IMR-90 (cell line): ENCODE measurements at regions of chr7 and their contacts with region 1.

Region 1: GRCh38 chr7:87152107-87152844 is at the start of gene DMTF1:
- DNase-seq: peak; percentile 93
- ATAC-seq: peak; percentile 88
- H3K4me3 ChIP-seq: peak within 1 kb of the TSS; percentile 81
- H3K27ac ChIP-seq: peak within 1 kb of the TSS; percentile 89
- H3K4me1 ChIP-seq: 0 out of 2 replicates have a peak, but pooled peaks cover 2% of the 10 kb centered on the region
- H3K27me3 ChIP-seq: no peaks in the 10 kb centered on the region
- CTCF ChIP-seq: 0 out of 2 replicates have a peak, but pooled peaks have one; percentile 6
- POLR2A ChIP-seq: peak; percentile 90
- RAD21 ChIP-seq: no peak
- total RNA-seq, gene DMTF1: 59.0 and 69.7 TPM in 2 replicates

Region 2: GRCh38 chr7:86939197-86939814 is 213.0 kb before region 1 on chr7:
- CTCF ChIA-PET with region 1: interaction called, 3 read pairs
- POLR2A ChIA-PET with region 1: no interaction called
- dilution Hi-C with region 1: loop called (anchors 25 kb)
- in situ Hi-C with region 1: loop called (anchors 5 kb)
- intact Hi-C with region 1: loop called (anchors 1 kb)
- DNase-seq: peak; percentile 60
- ATAC-seq: peak; percentile 85
- H3K4me3 ChIP-seq: no peak overlapping the region
- H3K27ac ChIP-seq: no peak overlapping the region
- H3K4me1 ChIP-seq: no peaks in the 10 kb centered on the region
- H3K27me3 ChIP-seq: no peaks in the 10 kb centered on the region
- CTCF ChIP-seq: peak; percentile 62
- POLR2A ChIP-seq: no peak
- RAD21 ChIP-seq: peak; percentile 50

Region 3: DNA sequence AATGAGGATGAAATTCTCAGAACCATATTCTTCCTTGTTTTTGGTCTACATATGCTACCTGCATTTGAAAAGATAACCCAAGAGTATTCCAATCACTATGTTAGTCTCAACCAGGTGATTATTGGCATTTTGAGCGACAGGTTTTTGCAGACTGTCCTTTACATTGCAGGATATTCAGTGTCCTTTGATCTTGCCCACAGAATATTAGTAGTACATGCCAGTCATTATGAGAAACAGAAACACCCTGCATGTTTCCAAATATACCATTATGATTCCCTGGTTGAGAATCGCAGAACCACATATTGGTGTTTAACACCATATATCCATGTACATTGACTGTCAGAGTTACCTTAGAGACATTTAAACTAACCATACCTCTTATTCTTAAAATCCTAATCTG is 36.7 kb after region 1 on chr7:
- CTCF ChIA-PET with region 1: no interaction called
- POLR2A ChIA-PET with region 1: no interaction called
- dilution Hi-C with region 1: no loop called
- in situ Hi-C with region 1: no loop called
- intact Hi-C with region 1: no loop called
- DNase-seq: no peak
- ATAC-seq: no peak
- H3K4me3 ChIP-seq: no peak overlapping the region
- H3K27ac ChIP-seq: no peak overlapping the region
- H3K4me1 ChIP-seq: no peaks in the 10 kb centered on the region
- H3K27me3 ChIP-seq: no peaks in the 10 kb centered on the region
- CTCF ChIP-seq: no peak
- POLR2A ChIP-seq: no peak
- RAD21 ChIP-seq: no peak

Region 4: DNA sequence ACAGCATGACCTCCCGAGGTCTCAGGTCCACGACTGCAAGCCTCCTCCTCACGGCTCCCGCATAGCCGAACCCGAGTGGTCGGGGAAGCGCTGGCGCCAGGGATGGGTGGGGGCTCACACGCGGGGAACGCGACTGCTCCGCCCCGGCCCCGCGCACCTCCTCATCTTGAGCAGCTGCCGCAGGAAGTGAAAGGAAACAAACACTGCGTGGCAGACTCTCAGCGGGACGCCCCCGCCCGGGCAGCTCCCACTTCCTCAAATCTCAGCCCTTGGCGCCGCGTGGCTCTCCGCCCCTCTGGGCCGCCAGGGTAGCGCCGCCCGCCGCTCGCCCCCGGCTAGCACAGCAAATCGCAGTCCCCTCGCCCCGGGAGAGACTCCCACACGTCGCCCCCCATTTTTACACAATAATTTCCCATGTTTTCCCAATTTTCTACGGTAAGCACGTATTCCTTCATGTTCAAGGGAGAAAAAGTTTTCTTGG is 67.3 kb after region 1 on chr7 and contains the start of gene TMEM243:
- CTCF ChIA-PET with region 1: no interaction called
- POLR2A ChIA-PET with region 1: interaction called, 3 read pairs
- dilution Hi-C with region 1: no loop called
- in situ Hi-C with region 1: no loop called
- intact Hi-C with region 1: loop called (anchors 1 kb)
- DNase-seq: peak; percentile 68
- ATAC-seq: peak; percentile 75
- H3K4me3 ChIP-seq: peak within 1 kb of the TSS; percentile 94
- H3K27ac ChIP-seq: peak within 1 kb of the TSS; percentile 54
- H3K4me1 ChIP-seq: peaks cover 6% of the 10 kb centered on the region
- H3K27me3 ChIP-seq: no peaks in the 10 kb centered on the region
- CTCF ChIP-seq: peak; percentile 17; the same call in 1 of the 2 replicates
- POLR2A ChIP-seq: peak; percentile 68; the same call in 1 of the 2 replicates
- RAD21 ChIP-seq: no peak
- total RNA-seq, gene TMEM243: 28.7 and 40.0 TPM in 2 replicates

Region 5: DNA sequence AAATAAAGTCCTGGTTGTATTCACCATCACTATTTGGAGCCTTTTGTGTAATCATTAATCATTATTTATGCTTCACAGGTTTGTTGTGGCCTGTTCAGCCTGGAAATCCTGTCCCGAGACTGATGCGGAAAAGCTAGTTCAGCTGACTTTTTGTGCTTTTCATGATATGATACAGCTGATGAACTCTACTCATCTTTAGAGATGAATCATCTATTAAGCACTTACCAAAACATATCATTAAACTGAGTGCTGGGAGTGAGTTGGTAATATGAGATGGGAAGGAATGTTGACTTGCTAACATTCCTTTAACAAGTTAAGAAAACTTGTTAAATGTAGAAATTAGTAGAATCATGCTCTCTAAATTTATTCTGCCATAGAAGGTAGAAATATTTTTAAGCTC is 246.2 kb after region 1 on chr7:
- CTCF ChIA-PET with region 1: no interaction called
- POLR2A ChIA-PET with region 1: no interaction called
- dilution Hi-C with region 1: no loop called
- in situ Hi-C with region 1: no loop called
- intact Hi-C with region 1: no loop called
- DNase-seq: peak; percentile 79
- ATAC-seq: peak; percentile 86
- H3K4me3 ChIP-seq: no peak overlapping the region
- H3K27ac ChIP-seq: peak overlapping the region; percentile 46; the same call in 1 of the 2 replicates
- H3K4me1 ChIP-seq: peaks cover 9% of the 10 kb centered on the region
- H3K27me3 ChIP-seq: no peaks in the 10 kb centered on the region
- CTCF ChIP-seq: no peak
- POLR2A ChIP-seq: no peak
- RAD21 ChIP-seq: no peak

Region 6: DNA sequence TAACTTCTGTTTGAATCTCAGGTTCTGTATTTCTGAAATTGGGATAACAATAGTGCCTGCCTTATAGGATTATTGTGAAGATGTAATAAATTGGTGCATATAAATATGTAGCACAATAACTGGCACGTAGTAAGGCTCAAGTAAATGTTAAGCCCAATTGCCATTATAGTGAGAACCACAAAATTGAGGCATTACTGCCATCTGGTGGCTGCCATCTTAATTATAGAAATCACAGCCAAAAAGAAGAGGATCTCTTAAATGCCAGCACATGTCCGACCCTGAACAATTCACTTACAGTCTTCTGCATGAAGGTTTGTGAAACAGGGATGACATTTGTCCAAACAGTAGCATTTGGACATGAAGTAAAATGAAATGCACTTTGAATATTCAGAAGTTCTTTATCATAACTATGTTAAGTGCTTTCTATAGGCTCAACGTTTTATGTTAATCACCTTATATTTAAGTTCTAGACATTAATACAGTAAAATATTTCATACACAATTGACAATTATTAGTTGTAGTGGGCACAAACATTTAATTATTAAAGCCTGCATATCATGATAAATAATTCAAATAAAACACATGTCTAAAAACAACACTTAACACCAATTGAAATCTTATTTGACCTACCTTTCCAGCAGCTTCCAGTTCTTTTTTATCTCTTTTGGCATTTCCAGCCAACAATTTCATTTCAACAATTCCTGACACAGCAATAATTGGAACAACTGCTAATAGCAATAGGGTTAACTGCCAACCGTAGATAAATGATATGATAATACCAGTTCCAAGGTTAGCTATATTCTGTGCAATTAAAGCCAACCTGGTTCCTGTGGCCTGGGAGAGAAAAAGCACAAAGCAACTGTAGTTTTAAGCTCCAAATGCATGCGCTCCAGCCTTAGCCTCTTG is 264.7 kb after region 1 on chr7:
- CTCF ChIA-PET with region 1: interaction called, 3 read pairs
- POLR2A ChIA-PET with region 1: no interaction called
- dilution Hi-C with region 1: no loop called
- in situ Hi-C with region 1: no loop called
- intact Hi-C with region 1: loop called (anchors 5 kb)
- DNase-seq: peak; percentile 69
- ATAC-seq: peak; percentile 22; the same call in 1 of the 2 replicates
- H3K4me3 ChIP-seq: no peak overlapping the region
- H3K27ac ChIP-seq: no peak overlapping the region
- H3K4me1 ChIP-seq: peaks cover 12% of the 10 kb centered on the region
- H3K27me3 ChIP-seq: peaks cover 2% of the 10 kb centered on the region; the same call in 1 of the 2 replicates
- CTCF ChIP-seq: peak; percentile 85
- POLR2A ChIP-seq: no peak
- RAD21 ChIP-seq: peak; percentile 89